ENCODE measurements at regions of chr6 and their contacts with region 1.

Region 1: DNA sequence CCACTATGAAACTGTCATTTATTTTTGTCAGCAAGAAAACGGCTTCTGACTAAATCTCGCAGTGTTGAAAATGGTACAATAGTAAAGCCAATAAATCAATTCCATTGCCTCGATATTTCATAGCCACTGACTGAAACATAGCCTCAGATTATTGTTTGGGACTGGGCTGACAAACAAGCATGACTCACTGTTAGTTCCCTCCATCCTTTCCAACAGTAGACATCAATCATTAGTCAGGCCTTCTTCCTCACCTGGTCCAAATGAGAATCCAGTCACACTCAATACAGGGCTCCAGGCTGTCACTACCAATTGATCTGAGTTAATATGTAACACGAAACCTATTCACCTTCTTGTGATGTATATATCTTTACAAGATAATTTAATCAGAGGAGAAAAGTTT is 66.1 kb downstream of the ADGRB3 start:
- DNase-seq: no peak
- H3K4me3 ChIP-seq: no peak overlapping the region
- H3K27ac ChIP-seq: no peak overlapping the region
- H3K4me1 ChIP-seq: no peaks in the 10 kb centered on the region
- H3K27me3 ChIP-seq: no peaks in the 10 kb centered on the region
- CTCF ChIP-seq: no peak
- POLR2A ChIP-seq: no peak

Region 2: DNA sequence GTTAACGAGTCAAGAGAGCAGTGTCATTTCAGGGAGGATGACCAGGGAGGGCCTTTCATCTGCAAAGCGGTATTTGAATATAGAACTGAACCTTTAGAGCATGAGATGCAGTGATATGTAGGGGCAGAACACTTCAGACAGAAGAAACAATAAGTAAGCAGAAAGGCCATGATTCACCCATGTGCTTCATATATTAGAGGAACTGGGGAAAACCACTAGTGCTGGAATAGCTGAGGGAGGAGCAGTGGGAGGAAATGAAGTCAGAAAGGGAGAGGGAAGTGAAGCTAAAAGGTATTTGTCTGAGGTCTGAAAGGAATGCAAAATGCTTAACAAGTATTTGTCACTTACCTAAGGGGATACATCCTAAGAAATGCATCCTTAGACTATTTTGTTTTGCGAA is 325.1 kb after region 1 on chr6:
- intact Hi-C with region 1: loop called (anchors 5 kb)
- DNase-seq: no peak
- H3K4me3 ChIP-seq: no peak overlapping the region
- H3K27ac ChIP-seq: no peak overlapping the region
- H3K4me1 ChIP-seq: no peaks in the 10 kb centered on the region
- H3K27me3 ChIP-seq: no peaks in the 10 kb centered on the region
- CTCF ChIP-seq: no peak
- POLR2A ChIP-seq: no peak